Endothelial cell of umbilical vein (primary cell): ENCODE measurements at regions of chr10 and their contacts with region 1.

Region 1: DNA sequence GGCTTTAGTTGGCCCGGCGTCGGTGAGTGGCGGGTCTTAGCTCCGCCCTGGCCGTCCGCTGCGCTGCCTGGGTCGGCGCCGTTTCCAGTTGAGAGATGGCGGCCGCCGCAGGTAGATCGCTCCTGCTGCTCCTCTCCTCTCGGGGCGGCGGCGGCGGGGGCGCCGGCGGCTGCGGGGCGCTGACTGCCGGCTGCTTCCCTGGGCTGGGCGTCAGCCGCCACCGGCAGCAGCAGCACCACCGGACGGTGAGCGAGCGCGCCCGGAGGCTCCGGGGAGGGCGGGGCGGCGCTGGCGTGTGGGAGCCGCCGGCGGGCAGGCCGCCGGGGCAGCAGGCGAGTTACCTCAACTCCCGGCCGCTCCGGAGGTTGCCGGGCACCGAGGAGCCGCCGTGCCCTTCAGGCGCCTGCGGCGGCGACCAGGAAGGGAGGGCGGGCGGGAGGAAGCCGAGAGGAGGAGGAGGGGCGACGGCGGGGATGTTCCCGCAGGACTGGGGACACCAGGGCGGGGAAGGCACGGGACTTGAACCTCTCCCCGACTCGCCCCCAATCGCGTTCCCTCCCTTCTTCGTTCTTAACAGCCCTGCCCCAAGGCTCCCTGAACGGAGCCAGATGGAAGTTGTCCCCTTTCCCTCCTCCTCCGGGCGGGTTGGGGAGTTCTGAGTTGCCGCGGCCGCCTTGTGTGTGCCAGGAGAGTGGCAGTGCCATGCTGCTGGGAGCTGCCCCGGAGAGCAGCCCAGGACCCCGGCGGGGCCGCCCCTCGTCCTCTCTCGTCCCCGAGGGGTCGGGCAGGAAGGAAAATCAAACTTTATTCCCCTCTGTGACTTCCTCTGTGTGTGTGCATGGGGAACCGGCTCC is at the start of gene MCU:
- DNase-seq: peak; percentile 96
- H3K4me3 ChIP-seq: peak within 1 kb of the TSS; percentile 74 to 98 (median 79)
- H3K27ac ChIP-seq: peak within 1 kb of the TSS; percentile 58
- H3K4me1 ChIP-seq: peaks cover 28% of the 10 kb centered on the region
- H3K27me3 ChIP-seq: no peaks in the 10 kb centered on the region
- CTCF ChIP-seq: no peak
- POLR2A ChIP-seq: peak; percentile 78
- total RNA-seq, gene MCU: 25.2 and 26.1 TPM in 2 replicates

Region 2: DNA sequence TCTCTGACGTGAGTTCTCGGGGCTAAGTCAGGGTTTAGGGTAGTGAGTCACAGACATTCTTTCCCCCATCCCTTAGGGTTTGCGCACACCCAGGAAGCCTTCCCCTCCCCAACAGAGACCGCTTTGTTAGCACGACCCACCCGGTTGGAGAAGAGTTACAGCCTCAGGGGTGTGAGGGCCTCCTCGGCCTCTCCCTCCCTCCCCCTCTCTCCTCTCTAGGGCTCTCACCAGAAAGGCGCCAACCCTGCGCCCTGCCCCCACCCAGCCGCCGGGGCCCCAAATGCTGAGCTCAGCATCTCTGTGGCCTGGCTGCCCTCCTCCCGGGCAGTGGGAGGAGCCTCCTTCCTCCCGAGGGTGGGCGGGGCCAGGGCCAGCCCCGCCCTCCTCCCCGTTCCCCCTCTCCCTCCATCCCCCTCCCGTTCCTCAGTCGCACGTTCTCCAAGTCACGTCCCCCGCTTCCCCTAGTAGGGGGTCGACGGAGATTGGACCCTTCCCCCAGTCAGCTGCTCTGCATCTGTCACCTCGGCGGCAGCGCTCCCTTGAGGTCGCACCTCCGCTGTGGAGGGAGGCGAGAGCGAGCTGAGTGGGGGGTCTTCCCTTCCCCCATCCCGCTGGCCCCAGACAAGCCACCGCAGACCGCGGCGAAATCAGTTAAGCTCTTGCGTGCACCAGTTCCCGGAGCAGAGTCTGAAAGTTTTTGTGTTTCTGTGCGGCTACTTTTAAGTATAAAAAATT is 431.5 kb before region 1 on chr10:
- CTCF ChIA-PET with region 1: no interaction called
- POLR2A ChIA-PET with region 1: no interaction called
- dilution Hi-C with region 1: no loop called
- intact Hi-C with region 1: no loop called
- DNase-seq: peak; percentile 55
- H3K4me3 ChIP-seq: peak overlapping the region; percentile 61 to 78 (median 71)
- H3K27ac ChIP-seq: peak overlapping the region; percentile 26
- H3K4me1 ChIP-seq: peaks cover 17% of the 10 kb centered on the region
- H3K27me3 ChIP-seq: no peaks in the 10 kb centered on the region
- CTCF ChIP-seq: no peak
- POLR2A ChIP-seq: no peak

Region 3: DNA sequence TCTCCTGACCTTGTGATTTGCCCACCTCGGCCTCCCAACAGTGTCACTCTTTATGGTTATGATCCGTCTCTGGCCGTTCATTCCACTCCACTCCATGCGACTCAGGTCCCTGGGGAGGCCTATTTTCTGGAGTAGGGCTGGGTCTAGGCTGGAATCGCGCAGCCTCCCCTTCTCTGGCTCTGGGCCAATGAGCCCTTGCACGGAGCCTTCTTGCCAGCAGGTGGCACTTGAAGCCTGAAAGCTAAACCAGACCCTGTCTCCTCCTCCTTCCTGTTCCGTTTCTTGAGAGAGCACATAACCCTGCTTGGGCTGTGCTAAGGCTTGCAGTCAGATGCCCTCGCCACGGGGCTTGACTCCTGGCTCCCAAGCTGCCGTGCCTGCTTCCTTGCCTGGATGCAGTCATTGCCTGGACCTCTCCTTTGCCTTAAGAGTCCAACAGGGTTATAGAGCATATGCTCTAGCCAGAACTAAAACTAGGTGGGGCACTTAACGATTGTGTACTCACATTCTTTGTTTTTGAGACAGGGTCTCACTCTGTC is 328.0 kb before region 1 on chr10:
- CTCF ChIA-PET with region 1: interaction called, 3 read pairs
- POLR2A ChIA-PET with region 1: interaction called, 3 read pairs
- dilution Hi-C with region 1: no loop called
- intact Hi-C with region 1: loop called (anchors 2 kb)
- DNase-seq: peak; percentile 87
- H3K4me3 ChIP-seq: no peak overlapping the region
- H3K27ac ChIP-seq: peak overlapping the region; percentile 4
- H3K4me1 ChIP-seq: peaks cover 4% of the 10 kb centered on the region
- H3K27me3 ChIP-seq: no peaks in the 10 kb centered on the region
- CTCF ChIP-seq: peak; percentile 89 to 95
- POLR2A ChIP-seq: peak; percentile 74

Region 4: DNA sequence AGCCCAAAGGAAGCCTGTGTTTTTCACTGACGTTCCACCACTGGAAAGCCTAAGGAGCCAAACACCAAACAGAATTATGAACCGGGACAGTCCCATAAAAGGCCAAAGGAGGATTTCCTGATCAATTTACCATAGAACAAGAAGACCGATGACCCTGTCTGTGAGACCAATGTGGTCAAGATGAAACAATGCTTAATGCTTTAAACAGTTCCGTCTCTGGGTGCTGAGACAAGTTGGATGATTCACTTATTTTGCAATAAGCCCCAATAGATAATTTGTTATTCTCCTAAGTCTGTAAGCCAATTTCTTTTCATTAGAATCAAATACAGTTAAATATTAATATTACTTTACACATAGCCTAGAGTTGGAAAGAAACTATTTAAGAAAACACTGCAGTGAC is 201.3 kb before region 1 on chr10:
- CTCF ChIA-PET with region 1: no interaction called
- POLR2A ChIA-PET with region 1: no interaction called
- dilution Hi-C with region 1: no loop called
- intact Hi-C with region 1: no loop called
- DNase-seq: no peak
- H3K4me3 ChIP-seq: no peak overlapping the region
- H3K27ac ChIP-seq: no peak overlapping the region
- H3K4me1 ChIP-seq: no peaks in the 10 kb centered on the region
- H3K27me3 ChIP-seq: no peaks in the 10 kb centered on the region
- CTCF ChIP-seq: no peak
- POLR2A ChIP-seq: no peak

Region 5: DNA sequence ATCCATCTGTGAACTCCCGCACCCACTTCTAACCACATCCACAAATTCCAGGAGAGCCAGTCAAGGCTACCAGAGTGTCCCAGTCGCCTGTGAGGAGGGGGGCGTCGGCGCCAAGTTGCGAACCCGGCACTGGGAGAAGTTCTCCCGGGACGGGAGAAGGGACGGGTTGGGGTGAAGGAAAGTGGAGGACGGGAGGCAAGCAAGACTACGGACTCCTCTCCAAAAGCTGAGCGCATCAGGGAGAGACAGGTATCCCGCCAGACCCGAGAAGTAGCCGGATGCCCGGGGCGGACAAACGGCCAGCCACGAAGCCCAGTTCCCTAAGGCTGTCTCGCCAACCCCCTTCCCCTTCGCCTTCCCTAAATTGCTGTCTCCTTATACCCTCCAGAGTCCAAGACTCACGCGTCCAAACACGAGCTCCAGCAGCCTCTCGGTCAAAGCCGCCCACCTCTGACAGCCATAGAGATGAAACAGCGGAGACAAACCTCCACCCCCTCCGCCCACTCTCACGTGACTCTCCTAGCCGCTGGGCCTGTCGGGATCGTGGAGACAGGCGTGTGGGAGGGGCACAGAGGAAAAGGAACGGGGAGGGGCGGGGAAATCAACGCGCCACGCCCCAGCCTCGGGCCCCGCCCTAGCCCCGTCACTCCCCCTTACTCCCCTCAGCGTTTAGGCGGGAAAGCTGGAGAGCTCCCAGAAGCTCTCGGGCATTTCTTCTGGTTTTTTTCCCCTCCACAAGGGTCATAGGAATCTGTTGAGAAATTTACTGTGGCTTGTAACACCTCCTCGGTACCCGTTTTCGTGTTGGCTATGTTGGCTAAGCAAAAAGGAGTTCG is 66.5 kb before region 1 on chr10 and contains the start of gene MICU1:
- CTCF ChIA-PET with region 1: interaction called, 11 read pairs
- POLR2A ChIA-PET with region 1: interaction called, 12 read pairs
- dilution Hi-C with region 1: no loop called
- intact Hi-C with region 1: loop called (anchors 1 kb)
- DNase-seq: peak; percentile 97
- H3K4me3 ChIP-seq: peak within 1 kb of the TSS; percentile 60 to 92 (median 83)
- H3K27ac ChIP-seq: peak within 1 kb of the TSS; percentile 61
- H3K4me1 ChIP-seq: peaks cover 11% of the 10 kb centered on the region
- H3K27me3 ChIP-seq: no peaks in the 10 kb centered on the region
- CTCF ChIP-seq: no peak
- POLR2A ChIP-seq: peak; percentile 82
- total RNA-seq, gene MICU1: 42.3 and 48.0 TPM in 2 replicates

Region 6: GRCh38 chr10:72659694-72660093 is 32.6 kb before region 1 on chr10:
- CTCF ChIA-PET with region 1: no interaction called
- POLR2A ChIA-PET with region 1: no interaction called
- dilution Hi-C with region 1: no loop called
- intact Hi-C with region 1: no loop called
- DNase-seq: no peak
- H3K4me3 ChIP-seq: no peak overlapping the region
- H3K27ac ChIP-seq: no peak overlapping the region
- H3K4me1 ChIP-seq: no peaks in the 10 kb centered on the region
- H3K27me3 ChIP-seq: no peaks in the 10 kb centered on the region
- CTCF ChIP-seq: no peak
- POLR2A ChIP-seq: no peak

Region 7: DNA sequence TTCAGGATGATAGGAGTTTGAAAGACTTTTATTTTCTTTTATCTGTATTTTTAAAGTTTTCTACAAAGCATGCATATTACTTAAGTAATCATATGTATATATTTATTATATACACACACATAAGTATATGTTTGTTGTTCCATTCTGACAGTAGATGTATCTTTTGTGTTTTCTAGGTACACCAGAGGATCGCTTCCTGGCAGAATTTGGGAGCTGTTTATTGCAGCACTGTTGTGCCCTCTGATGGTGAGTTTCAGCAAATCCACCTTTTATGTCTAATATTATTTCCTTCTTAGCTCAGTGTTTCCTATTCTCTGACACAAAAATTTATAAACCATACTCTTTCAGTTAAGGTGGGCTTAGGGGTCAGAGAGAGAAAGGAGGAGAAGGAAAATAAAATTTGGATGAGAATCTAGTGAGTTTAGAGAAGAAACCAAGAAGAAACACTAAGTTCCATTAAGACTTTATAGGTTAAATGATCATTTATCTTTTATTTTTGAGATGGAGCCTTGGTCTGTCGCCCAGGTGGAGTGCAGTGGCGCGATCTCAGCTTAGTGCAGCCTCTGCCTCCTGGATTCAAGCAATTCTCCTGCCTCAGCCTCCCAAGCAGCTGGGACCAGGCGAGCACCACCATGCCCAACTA is 142.0 kb after region 1 on chr10:
- CTCF ChIA-PET with region 1: interaction called, 133 read pairs
- POLR2A ChIA-PET with region 1: interaction called, 7 read pairs
- dilution Hi-C with region 1: no loop called
- intact Hi-C with region 1: loop called (anchors 1 kb)
- DNase-seq: peak; percentile 80
- H3K4me3 ChIP-seq: no peak overlapping the region
- H3K27ac ChIP-seq: no peak overlapping the region
- H3K4me1 ChIP-seq: peaks cover 5% of the 10 kb centered on the region
- H3K27me3 ChIP-seq: no peaks in the 10 kb centered on the region
- CTCF ChIP-seq: peak; percentile 40 to 46
- POLR2A ChIP-seq: no peak

Region 8: GRCh38 chr10:73060738-73061635 is 368.7 kb after region 1 on chr10:
- CTCF ChIA-PET with region 1: interaction called, 8 read pairs
- POLR2A ChIA-PET with region 1: no interaction called
- dilution Hi-C with region 1: no loop called
- intact Hi-C with region 1: loop called (anchors 2 kb)
- DNase-seq: peak; percentile 59
- H3K4me3 ChIP-seq: no peak overlapping the region
- H3K27ac ChIP-seq: no peak overlapping the region
- H3K4me1 ChIP-seq: peaks cover 9% of the 10 kb centered on the region
- H3K27me3 ChIP-seq: no peaks in the 10 kb centered on the region
- CTCF ChIP-seq: peak in 1 of 2 donors; percentile 40
- POLR2A ChIP-seq: no peak